AG04450 (cell line): ENCODE measurements at regions of chr14 and their contacts with region 1.

Region 1: GRCh38 chr14:53055003-53055402 is 98.1 kb downstream of the DDHD1 start:
- DNase-seq: peak; percentile 42
- H3K4me3 ChIP-seq: no peak overlapping the region
- H3K27ac ChIP-seq: no peak overlapping the region
- H3K27me3 ChIP-seq: no peaks in the 10 kb centered on the region
- CTCF ChIP-seq: peak; percentile 77

Region 2: DNA sequence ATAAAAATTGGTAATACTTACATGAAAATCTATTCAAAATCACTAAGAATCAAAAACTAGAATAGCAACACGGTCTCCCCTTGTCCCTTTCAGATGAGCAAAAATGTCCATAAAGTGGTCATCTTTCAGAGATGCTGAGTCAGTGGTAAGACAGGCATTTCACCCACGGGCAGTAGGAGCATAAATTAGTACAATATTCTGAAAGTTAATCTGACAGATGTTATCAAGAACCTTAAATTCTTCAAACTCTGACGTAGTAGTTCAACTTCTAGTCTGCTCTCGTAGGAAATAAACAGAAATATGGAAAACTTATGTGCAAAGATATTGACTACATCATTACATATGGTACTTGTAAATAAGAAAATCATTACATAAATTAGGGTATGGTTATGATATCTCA is 230.5 kb before region 1 on chr14:
- CTCF ChIA-PET with region 1: interaction called, 28 read pairs
- POLR2A ChIA-PET with region 1: no interaction called
- DNase-seq: no peak
- H3K4me3 ChIP-seq: no peak overlapping the region
- H3K27ac ChIP-seq: no peak overlapping the region
- H3K27me3 ChIP-seq: no peaks in the 10 kb centered on the region
- CTCF ChIP-seq: no peak

Region 3: GRCh38 chr14:52885230-52885629 is 169.8 kb before region 1 on chr14:
- CTCF ChIA-PET with region 1: no interaction called
- POLR2A ChIA-PET with region 1: interaction called, 12 read pairs
- DNase-seq: no peak
- H3K4me3 ChIP-seq: no peak overlapping the region
- H3K27ac ChIP-seq: no peak overlapping the region
- H3K27me3 ChIP-seq: no peaks in the 10 kb centered on the region
- CTCF ChIP-seq: no peak

Region 4: DNA sequence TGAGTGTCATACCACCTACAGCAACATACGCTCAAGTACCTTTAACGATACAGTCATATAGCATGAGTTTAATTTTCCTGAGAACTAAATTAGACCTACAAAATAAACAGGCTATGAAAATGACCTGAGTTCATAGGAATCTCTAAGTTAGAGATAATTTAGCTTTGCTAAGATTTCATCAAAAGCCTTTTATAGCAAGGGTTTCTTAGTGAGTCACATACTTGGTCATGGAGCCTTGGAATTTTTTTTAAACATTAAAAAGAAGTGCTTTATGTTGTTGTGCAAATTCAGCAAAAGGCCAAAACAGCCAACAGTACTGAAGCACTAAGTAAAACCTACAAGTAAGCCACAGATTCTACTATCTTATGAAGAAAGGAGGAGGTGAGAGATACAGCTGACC is 10.5 kb before region 1 on chr14:
- CTCF ChIA-PET with region 1: interaction called, 20 read pairs
- POLR2A ChIA-PET with region 1: no interaction called
- DNase-seq: no peak
- H3K4me3 ChIP-seq: no peak overlapping the region
- H3K27ac ChIP-seq: peak overlapping the region; percentile 58
- H3K27me3 ChIP-seq: no peaks in the 10 kb centered on the region
- CTCF ChIP-seq: no peak